ENCODE measurements at regions of chr5 and their contacts with region 1.

Region 1: DNA sequence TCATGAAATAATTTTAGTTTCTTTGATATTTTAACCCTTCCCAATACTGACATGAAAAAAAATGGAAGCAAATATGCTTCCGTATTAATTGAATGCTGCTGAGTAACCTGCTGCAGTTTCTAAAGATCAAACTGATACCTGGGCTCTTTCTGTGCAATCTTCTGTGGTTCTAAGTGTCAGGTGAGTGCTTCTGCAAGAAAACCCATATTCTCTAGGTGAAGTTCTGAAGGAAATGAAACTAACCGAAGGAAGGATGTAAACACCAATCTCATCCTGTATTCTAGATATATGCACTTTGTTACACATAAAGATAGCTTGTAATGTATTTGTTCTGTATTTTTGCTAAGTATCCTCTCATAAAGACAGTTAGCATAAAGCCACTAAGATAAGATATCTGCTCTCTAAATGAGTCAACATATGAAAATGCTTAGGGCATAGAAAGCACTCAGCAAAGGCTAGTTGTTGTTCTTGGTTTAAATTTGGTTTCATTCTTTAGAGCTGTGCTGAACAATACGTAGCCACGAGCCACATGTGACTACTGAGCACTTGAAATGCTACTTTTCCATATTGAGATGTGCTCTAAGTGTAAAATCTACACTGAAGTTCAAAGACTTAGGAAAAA is 52.0 kb downstream of the ITGA2 start:
- DNase-seq: peak; percentile 58
- ATAC-seq: peak; percentile 91
- H3K4me3 Mint-ChIP-seq: peak overlapping the region; percentile 49
- H3K27ac Mint-ChIP-seq: peak overlapping the region; percentile 20
- H3K4me1 Mint-ChIP-seq: peaks cover 47% of the 10 kb centered on the region
- H3K27me3 Mint-ChIP-seq: peaks cover 3% of the 10 kb centered on the region
- CTCF ChIP-seq: no peak

Region 2: GRCh38 chr5:52605317-52606313 is 435.6 kb before region 1 on chr5:
- CTCF ChIA-PET with region 1: no interaction called
- POLR2A ChIA-PET with region 1: no interaction called
- intact Hi-C with region 1: no loop called
- DNase-seq: no peak
- ATAC-seq: no peak
- H3K4me3 Mint-ChIP-seq: no peak overlapping the region
- H3K27ac Mint-ChIP-seq: no peak overlapping the region
- H3K4me1 Mint-ChIP-seq: no peaks in the 10 kb centered on the region
- H3K27me3 Mint-ChIP-seq: no peaks in the 10 kb centered on the region
- CTCF ChIP-seq: no peak

Region 3: GRCh38 chr5:53008751-53009150 is 32.4 kb before region 1 on chr5:
- CTCF ChIA-PET with region 1: interaction called, 6 read pairs
- POLR2A ChIA-PET with region 1: interaction called, 3 read pairs
- intact Hi-C with region 1: loop called (anchors 2 kb)
- DNase-seq: peak; percentile 69
- ATAC-seq: peak; percentile 83
- H3K4me3 Mint-ChIP-seq: no peak overlapping the region
- H3K27ac Mint-ChIP-seq: peak overlapping the region; percentile 65
- H3K4me1 Mint-ChIP-seq: peaks cover 56% of the 10 kb centered on the region
- H3K27me3 Mint-ChIP-seq: peaks cover 9% of the 10 kb centered on the region
- CTCF ChIP-seq: no peak

Measured in activated CD8-positive, alpha-beta T cell treated with anti-CD3 and anti-CD28 coated beads for 36 hours (primary cell).